A673 (cell line): ENCODE measurements at regions of chr16 and their contacts with region 1.

Region 1: GRCh38 chr16:5490499-5490898 is 392.9 kb upstream of the EEF2KMT start:
- DNase-seq: peak; percentile 74
- H3K4me3 ChIP-seq: no peak overlapping the region
- H3K27ac ChIP-seq: no peak overlapping the region
- H3K4me1 ChIP-seq: no peaks in the 10 kb centered on the region
- H3K27me3 ChIP-seq: peaks cover 4% of the 10 kb centered on the region
- CTCF ChIP-seq: peak; percentile 94

Region 2: GRCh38 chr16:5206331-5206990 is 284.0 kb before region 1 on chr16:
- CTCF ChIA-PET with region 1: no interaction called
- POLR2A ChIA-PET with region 1: no interaction called
- intact Hi-C with region 1: no loop called
- DNase-seq: no peak
- H3K4me3 ChIP-seq: no peak overlapping the region
- H3K27ac ChIP-seq: no peak overlapping the region
- H3K4me1 ChIP-seq: no peaks in the 10 kb centered on the region
- H3K27me3 ChIP-seq: no peaks in the 10 kb centered on the region
- CTCF ChIP-seq: no peak

Region 3: DNA sequence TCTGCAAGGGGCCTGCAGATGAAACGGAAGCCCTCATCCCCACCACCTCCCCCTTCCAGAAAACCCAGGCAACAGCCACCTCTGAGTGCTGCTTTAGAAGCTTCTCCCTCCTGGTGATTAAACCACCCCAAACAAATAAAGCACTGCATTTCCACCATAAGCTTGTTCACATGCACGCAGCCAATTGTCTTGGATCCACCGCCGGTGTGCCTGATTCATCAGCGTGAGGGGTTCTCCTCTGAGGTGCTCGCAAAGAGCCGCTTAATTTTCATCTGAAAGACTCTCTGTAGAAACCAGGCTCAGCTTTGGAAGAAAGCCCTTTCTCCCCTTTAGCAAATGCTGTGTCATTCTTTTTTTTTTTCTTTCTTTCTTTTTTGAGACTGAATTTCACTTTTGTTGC is 237.7 kb before region 1 on chr16:
- CTCF ChIA-PET with region 1: no interaction called
- POLR2A ChIA-PET with region 1: no interaction called
- intact Hi-C with region 1: loop called (anchors 5 kb)
- DNase-seq: no peak
- H3K4me3 ChIP-seq: no peak overlapping the region
- H3K27ac ChIP-seq: no peak overlapping the region
- H3K4me1 ChIP-seq: no peaks in the 10 kb centered on the region
- H3K27me3 ChIP-seq: peaks cover 9% of the 10 kb centered on the region
- CTCF ChIP-seq: no peak